ENCODE measurements at regions of chr16 and their contacts with region 1.

Region 1: DNA sequence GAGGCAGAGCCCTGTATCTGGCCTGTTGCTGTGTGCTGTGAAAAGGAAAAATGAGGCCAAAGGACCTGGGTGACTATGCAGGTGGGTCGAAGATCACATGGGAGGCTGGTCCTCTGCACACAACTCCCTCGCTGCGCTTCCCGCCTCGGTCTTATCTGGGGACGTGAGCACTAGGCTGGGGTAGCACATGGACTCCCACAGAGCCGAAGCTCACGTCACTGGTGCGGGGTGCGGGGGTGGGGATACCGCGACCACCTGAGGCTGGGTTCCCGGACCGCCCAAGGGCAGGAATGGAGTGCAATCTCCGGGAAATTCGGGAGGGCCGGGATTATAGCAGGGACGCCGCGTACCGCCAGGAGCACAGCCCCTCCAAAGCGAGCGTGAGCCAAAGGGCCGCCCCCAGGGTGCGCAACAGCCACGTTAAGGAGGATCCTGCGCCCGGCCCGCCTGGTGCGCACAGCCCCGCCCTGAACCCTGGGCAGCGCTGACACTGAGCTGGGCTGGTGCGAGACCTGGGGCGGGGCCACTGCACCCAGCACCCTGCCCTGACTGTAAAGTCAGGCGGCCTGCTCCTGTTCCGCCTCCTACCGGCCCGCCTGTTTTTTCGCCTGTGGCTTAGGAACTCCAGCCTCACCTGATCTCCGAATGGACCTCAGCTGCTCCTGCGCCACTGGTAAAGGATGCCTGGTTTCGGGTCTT is 4.8 kb downstream of the MT1A start:
- DNase-seq: peak; percentile 59 to 85 (median 79)
- ATAC-seq: peak; percentile 91 to 94 (median 92)
- H3K4me3 ChIP-seq: peak overlapping the region in 10 of 12 donors; percentile 24 to 55 (median 43)
- H3K27ac ChIP-seq: peak overlapping the region in 4 of 12 donors; percentile 9 to 41 (median 36)
- H3K4me1 ChIP-seq: peaks cover 0 to 26% (median 16%) of the 10 kb centered on the region in 12 donors
- H3K27me3 ChIP-seq: peaks cover 0 to 86% (median 31%) of the 10 kb centered on the region in 9 donors
- CTCF ChIP-seq: peak; percentile 15 to 58 (median 42)
- POLR2A ChIP-seq: no peak

Region 2: GRCh38 chr16:56667581-56668571 is 24.6 kb after region 1 on chr16 and contains the start of gene MT1G:
- intact Hi-C with region 1: loop called in 1 of 10 experiments (anchors 2 kb)
- DNase-seq: peak; percentile 48 to 84 (median 56)
- ATAC-seq: peak in 3 of 4 donors; percentile 87 to 93 (median 87)
- H3K4me3 ChIP-seq: peak within 1 kb of the TSS in 8 of 12 donors; percentile 3 to 39 (median 26)
- H3K27ac ChIP-seq: no peak within 1 kb of the TSS
- H3K4me1 ChIP-seq: peaks cover 0 to 27% (median 13%) of the 10 kb centered on the region in 12 donors
- H3K27me3 ChIP-seq: peaks cover 15 to 95% (median 51%) of the 10 kb centered on the region in 9 donors
- CTCF ChIP-seq: no peak
- POLR2A ChIP-seq: no peak
- total RNA-seq, gene MT1G: 1.4 to 19.1 (median 6.0) TPM in 3 of 9 donors, not detected in the others